Right cardiac atrium (tissue), 5 donors: ENCODE measurements at regions of chr4 and their contacts with region 1.

Region 1: DNA sequence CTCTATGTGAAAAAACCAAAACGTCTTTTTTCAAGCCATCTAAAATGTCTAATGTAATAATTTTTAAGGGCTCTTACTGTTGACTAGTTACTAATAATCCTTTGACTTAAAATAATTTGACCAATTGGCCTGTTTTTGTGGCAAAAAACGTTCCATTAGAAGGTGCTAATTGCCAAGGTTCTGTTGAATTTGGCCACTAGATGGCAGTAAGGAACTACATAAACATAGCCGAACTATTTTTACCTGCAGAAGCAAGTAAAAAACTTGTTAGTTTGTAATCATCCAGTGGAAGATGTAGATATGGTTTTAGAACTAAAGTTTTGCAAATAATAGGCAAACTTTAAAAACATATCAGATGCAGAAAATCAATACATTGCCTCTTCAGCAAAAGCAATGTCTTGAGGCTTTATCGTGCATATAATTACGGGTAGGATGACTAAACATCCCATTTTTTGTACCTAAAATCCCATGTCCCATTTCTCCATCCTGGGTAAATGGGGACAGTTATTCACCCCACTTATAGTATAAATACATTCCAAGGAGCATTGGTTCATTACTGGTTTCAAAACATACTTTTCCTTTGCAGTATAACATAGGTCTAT is 57.6 kb downstream of the PROM1 start:
- DNase-seq: no peak
- ATAC-seq: no peak
- H3K4me3 ChIP-seq: no peak overlapping the region
- H3K27ac ChIP-seq: no peak overlapping the region
- H3K4me1 ChIP-seq: no peaks in the 10 kb centered on the region
- H3K27me3 ChIP-seq: no peaks in the 10 kb centered on the region

Region 2: GRCh38 chr4:15848191-15848842 is 177.9 kb before region 1 on chr4:
- intact Hi-C with region 1: no loop called
- DNase-seq: no peak
- ATAC-seq: no peak
- H3K4me3 ChIP-seq: no peak overlapping the region
- H3K27ac ChIP-seq: no peak overlapping the region
- H3K4me1 ChIP-seq: no peaks in the 10 kb centered on the region
- H3K27me3 ChIP-seq: no peaks in the 10 kb centered on the region

Region 3: DNA sequence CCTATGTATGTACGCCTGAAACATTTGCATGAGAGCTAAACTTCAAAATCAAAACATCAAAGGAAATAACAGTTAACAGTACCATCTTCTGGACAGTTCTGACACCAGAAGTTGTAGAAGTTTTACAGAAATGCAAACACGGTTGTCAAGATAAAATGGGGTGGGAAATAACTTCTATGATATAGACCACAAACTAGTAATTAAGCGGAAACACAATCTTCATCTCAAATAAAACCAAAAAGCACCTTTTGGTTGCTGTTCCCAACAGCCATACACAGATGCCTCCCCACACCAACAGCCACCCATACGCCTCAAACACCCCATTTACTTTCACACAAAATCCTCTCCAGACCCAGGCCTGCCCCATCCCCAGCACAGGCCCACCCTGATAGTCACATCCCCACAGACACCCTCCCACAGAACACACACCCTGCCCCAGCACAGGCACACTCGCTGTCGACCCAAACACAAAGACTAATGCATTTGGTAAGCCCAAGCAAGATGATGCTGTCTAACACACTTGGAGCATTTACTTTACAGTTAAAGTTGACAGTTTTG is 135.7 kb after region 1 on chr4:
- intact Hi-C with region 1: loop called in 1 of 4 experiments (anchors 10 kb)
- DNase-seq: no peak
- ATAC-seq: no peak
- H3K4me3 ChIP-seq: no peak overlapping the region
- H3K27ac ChIP-seq: no peak overlapping the region
- H3K4me1 ChIP-seq: peaks cover 4% of the 10 kb centered on the region
- H3K27me3 ChIP-seq: no peaks in the 10 kb centered on the region

Region 4: DNA sequence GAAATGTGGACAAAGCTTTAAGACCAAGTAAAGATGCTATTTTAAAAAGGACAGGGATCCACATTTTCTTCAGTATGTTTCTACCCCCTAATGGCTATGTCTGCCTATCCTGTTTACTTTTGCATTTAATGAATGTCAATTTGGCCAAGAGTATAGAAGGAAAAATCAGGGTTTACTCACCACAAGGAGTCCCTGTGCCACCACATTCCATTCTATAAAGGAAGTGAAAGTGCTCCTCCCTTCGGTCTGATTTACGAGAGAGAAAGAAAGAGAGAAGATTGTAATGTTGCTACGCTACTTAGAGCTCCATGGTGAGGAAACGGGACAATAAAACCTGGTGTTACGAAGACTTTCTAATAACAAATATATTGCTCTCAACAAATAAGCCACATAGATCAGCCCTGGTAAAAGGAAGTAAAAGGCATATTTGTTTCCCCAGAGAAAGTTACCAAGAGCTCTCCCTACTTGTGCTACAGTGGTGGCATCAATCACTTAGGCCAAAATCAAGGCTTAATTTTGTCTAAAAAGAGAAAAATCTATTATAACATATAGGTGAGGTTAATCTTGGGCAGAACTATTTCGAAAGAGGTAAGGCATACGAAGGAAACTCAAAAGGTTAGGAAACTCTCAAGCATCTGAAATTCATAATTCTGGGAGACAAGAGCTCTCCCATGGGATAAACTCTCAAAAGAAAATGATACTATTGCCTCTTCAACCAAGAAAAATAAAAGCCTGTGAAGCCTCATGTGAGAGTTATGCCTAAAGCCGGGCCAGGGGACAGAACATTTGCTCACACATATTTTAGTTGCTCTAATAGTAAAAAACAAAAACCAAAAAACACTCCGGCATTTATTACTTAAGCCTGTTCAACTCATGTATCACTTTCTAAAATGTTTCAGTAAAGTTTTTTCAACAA is 170.5 kb after region 1 on chr4:
- intact Hi-C with region 1: loop called (anchors 5 to 10 kb)
- DNase-seq: no peak
- ATAC-seq: peak; percentile 90
- H3K4me3 ChIP-seq: peak overlapping the region; percentile 55
- H3K27ac ChIP-seq: no peak overlapping the region
- H3K4me1 ChIP-seq: peaks cover 5% of the 10 kb centered on the region
- H3K27me3 ChIP-seq: no peaks in the 10 kb centered on the region